HEK293 (cell line): ENCODE measurements at regions of chr11 and their contacts with region 1.

Region 1: DNA sequence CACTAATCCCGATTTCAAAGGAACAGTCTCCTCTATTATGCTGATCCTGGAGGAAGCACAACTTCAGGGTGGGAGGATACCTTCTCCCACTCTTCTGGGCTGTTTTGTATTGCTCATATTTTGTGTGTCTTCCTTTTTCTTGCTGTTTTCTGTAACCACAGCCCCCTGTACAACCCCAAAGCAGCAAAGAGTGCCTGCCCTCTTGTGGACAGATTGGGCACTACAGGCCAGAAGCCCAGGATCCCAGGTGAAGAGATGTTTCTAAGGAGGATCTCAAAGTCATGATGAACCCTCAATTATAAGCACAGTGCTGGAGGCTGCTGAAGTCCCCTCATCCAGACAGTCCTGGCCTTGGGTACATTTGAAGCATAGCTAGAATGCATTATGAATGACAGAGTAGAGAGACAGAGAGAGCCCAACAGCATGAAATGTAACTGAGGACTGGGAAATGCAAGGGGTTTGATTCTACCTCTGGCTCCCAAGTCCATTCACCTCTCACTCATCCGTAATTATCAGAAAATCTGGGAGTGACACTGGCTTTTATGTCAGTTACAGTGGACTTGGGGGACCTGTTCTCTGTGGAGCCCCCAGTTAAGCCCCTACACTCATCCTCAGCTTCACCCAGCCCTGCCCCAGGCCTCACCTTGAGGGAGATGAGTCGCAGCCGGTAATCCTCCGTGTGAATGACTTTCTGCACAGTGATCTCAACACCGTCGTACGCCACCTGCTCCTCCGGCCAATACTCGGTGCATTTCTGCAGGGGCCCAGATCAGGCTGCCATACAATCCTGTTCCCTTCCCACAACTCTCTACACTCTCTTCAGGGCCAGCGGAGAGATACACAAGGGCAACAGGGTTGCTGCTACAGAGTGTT is 6.2 kb upstream of the IGSF22 start:
- H3K4me3 ChIP-seq: no peak overlapping the region
- H3K27ac ChIP-seq: no peak overlapping the region
- H3K4me1 ChIP-seq: no peaks in the 10 kb centered on the region
- CTCF ChIP-seq: peak; percentile 41; the same call in 1 of the 2 replicates

Region 2: GRCh38 chr11:18540207-18541009 is 191.8 kb before region 1 on chr11:
- CTCF ChIA-PET with region 1: interaction called, 24 read pairs
- POLR2A ChIA-PET with region 1: no interaction called
- H3K4me3 ChIP-seq: no peak overlapping the region
- H3K27ac ChIP-seq: no peak overlapping the region
- H3K4me1 ChIP-seq: no peaks in the 10 kb centered on the region
- CTCF ChIP-seq: no peak

Region 3: GRCh38 chr11:18599739-18600230 is 132.4 kb before region 1 on chr11 and contains the start of gene MISFA:
- CTCF ChIA-PET with region 1: no interaction called
- POLR2A ChIA-PET with region 1: no interaction called
- H3K4me3 ChIP-seq: no peak within 1 kb of the TSS
- H3K27ac ChIP-seq: no peak within 1 kb of the TSS
- H3K4me1 ChIP-seq: no peaks in the 10 kb centered on the region
- CTCF ChIP-seq: no peak

Region 4: GRCh38 chr11:18650859-18651557 is 81.2 kb before region 1 on chr11:
- CTCF ChIA-PET with region 1: interaction called, 17 read pairs
- POLR2A ChIA-PET with region 1: no interaction called
- H3K4me3 ChIP-seq: no peak overlapping the region
- H3K27ac ChIP-seq: no peak overlapping the region
- H3K4me1 ChIP-seq: no peaks in the 10 kb centered on the region
- CTCF ChIP-seq: peak; percentile 41; the same call in 1 of the 2 replicates

Region 5: GRCh38 chr11:18710545-18710944 is 21.6 kb before region 1 on chr11:
- CTCF ChIA-PET with region 1: interaction called, 19 read pairs
- POLR2A ChIA-PET with region 1: no interaction called
- H3K4me3 ChIP-seq: no peak overlapping the region
- H3K27ac ChIP-seq: no peak overlapping the region
- H3K4me1 ChIP-seq: no peaks in the 10 kb centered on the region
- CTCF ChIP-seq: no peak

Region 6: GRCh38 chr11:18721561-18722292 is 10.5 kb before region 1 on chr11:
- CTCF ChIA-PET with region 1: interaction called, 28 read pairs
- POLR2A ChIA-PET with region 1: no interaction called
- H3K4me3 ChIP-seq: peak overlapping the region; percentile 15; the same call in 1 of the 2 replicates
- H3K27ac ChIP-seq: no peak overlapping the region
- H3K4me1 ChIP-seq: no peaks in the 10 kb centered on the region
- CTCF ChIP-seq: peak; percentile 33; the same call in 1 of the 2 replicates

Region 7: DNA sequence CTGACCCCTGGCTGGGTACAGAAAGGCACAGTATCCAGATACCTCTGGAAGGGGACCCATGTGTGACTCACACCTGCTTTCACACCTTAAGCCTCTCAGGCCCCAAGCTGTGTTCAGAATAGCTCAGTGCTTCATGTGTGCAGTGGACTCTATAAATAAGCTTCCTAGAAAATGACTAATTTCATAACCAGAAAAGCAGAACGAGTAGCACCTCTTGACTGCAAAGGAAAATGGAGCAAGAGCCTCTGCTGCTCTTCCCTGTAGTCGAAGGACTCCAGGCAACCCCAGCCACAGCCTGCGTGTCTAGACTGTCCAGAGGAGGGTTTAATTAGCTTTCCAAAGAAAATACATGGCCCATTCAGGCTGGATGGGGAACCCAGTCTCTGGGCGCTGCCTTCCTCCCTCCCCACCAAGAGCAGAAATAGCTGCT is 36.3 kb after region 1 on chr11:
- CTCF ChIA-PET with region 1: interaction called, 10 read pairs
- POLR2A ChIA-PET with region 1: no interaction called
- H3K4me3 ChIP-seq: no peak overlapping the region
- H3K27ac ChIP-seq: no peak overlapping the region
- H3K4me1 ChIP-seq: no peaks in the 10 kb centered on the region
- CTCF ChIP-seq: no peak

Region 8: DNA sequence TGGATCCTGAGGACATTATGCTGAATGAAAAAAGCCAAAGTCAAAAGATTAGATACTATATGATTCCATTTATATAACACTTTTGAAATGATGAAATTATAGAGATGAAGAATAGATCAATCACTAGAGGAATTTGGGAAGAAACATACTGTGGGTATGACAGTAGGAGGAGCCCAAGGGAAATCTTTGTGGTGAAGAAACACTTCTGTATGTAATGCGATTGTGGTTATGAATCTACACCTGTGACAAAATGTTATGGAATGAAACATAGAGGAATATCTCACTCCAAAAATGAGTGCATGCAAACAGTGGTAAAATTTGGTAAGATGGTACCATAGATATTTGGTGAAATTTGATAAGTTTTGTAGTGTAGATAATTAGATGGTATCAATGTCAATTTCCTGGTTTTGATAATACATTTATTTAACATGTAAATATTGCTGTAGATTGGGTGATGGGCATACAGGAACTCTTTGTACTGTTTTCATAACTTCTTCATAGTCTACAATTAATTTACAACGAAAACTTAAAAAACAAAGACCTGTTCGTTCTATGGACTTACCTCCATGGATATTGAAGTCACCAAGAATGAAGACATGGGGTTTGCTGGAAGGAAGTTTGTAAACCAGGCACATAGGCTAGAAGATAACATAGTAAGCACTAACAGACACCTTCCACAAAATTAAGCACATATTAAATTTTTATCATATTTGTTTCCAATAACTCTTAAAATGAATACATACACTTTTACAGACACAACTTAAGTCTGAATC is 195.6 kb after region 1 on chr11:
- CTCF ChIA-PET with region 1: no interaction called
- POLR2A ChIA-PET with region 1: no interaction called
- H3K4me3 ChIP-seq: no peak overlapping the region
- H3K27ac ChIP-seq: no peak overlapping the region
- H3K4me1 ChIP-seq: no peaks in the 10 kb centered on the region
- CTCF ChIP-seq: no peak